ENCODE measurements at regions of chr11 and their contacts with region 1.

Region 1: DNA sequence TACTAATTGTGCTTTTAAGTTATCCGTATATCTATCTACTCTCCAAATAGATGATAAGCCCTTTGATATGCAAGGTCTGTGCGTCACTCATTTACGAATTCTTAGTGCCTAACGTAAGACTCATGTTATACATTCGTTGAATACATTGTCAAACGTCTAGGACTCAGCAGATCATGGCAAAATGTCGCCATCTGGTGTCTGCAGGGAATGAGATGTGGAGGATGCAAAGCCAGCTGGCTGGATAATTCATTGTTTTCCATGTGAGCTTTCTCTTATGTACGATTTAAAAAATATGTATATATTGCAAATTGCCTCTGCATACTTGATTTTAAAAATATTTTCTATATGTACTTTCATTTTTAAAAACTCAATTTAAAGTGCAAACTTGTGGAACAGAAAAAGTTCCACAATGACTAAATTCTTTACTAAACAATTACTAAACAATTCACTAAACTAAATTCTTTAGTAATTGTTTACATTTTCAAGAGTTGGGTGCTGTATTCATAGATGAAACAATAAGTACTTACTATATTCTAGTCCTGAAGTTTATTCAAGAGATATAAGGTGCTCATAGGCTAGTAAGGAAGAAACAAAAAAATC is 33.8 kb downstream of the ZNF202 start:
- DNase-seq: peak; percentile 62
- H3K4me3 Mint-ChIP-seq: no peak overlapping the region
- H3K27ac Mint-ChIP-seq: no peak overlapping the region
- H3K4me1 Mint-ChIP-seq: no peaks in the 10 kb centered on the region
- H3K27me3 Mint-ChIP-seq: peaks cover 15% of the 10 kb centered on the region

Region 2: DNA sequence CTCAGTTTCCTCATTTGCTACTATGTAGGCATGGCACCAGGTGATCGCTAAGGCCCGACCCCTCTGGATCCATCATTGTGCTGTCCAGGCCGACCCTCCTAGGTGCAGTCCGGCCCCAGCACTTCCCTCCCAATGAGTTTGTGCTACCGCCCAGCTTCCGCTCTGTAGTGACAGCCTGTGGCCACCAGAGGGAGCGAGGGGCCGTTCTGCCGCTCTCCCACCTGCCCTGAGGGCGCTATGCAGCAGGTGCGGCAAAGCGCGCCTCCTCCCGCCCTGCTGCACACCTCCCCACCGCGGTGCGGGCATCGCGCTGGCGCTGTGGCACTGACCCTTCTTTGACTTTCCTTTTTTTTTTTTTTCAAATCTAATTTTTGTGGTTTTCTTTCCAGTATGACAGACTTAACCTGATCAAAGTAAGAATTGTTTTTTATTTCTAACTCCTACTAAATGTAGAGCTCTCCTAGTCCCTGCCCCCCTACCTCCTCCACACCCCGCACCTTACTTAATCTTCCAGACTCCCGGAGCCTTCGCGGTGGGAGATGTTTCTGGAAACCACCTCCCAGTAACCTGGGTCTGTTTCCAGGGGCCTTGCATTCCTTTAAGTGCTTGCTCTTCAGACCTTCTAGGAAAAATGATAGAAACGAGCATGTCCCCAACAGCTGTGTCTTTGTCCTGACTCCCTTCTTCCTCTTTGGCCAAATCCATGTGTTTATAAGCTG is 127.0 kb before region 1 on chr11:
- CTCF ChIA-PET with region 1: interaction called, 28 read pairs
- POLR2A ChIA-PET with region 1: no interaction called
- DNase-seq: peak; percentile 71
- H3K4me3 Mint-ChIP-seq: no peak overlapping the region
- H3K27ac Mint-ChIP-seq: no peak overlapping the region
- H3K4me1 Mint-ChIP-seq: peaks cover 32% of the 10 kb centered on the region
- H3K27me3 Mint-ChIP-seq: no peaks in the 10 kb centered on the region

Region 3: GRCh38 chr11:123640677-123641494 is 66.8 kb before region 1 on chr11:
- CTCF ChIA-PET with region 1: interaction called, 24 read pairs
- POLR2A ChIA-PET with region 1: no interaction called
- DNase-seq: peak; percentile 51
- H3K4me3 Mint-ChIP-seq: no peak overlapping the region
- H3K27ac Mint-ChIP-seq: no peak overlapping the region
- H3K4me1 Mint-ChIP-seq: no peaks in the 10 kb centered on the region
- H3K27me3 Mint-ChIP-seq: peaks cover 4% of the 10 kb centered on the region

Region 4: DNA sequence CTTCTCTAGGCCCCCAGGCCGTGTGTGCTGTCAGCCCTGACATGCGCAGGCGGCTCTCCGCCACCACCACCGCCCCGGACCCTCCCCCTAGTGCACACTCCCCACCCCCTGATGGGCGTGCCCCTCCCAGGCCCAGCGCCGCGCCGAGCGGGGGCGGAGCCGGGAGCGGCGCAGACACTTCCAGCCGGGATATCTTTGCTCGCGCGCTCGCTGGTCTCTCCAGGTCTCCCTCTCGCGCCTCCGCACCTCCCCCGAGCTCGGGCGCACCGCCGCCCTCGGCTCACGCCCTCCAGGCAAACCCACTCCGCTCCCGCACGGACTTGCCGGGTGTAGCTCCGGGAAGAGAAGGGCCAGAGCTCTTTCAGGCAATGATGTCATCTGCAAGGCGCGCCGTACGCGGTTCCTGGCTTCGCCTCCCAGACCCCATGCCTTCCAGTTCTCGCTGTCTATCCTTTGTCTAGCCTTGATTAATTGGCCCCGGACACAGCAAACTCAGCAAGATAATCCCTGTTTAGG is 53.1 kb before region 1 on chr11 and contains the start of gene SCN3B:
- CTCF ChIA-PET with region 1: interaction called, 14 read pairs
- POLR2A ChIA-PET with region 1: no interaction called
- DNase-seq: no peak
- H3K4me3 Mint-ChIP-seq: peak within 1 kb of the TSS; percentile 48
- H3K27ac Mint-ChIP-seq: no peak within 1 kb of the TSS
- H3K4me1 Mint-ChIP-seq: peaks cover 21% of the 10 kb centered on the region
- H3K27me3 Mint-ChIP-seq: peaks cover 49% of the 10 kb centered on the region
- total RNA-seq, gene SCN3B: 0.03 TPM in 1 of 2 experiments, not detected in the other

Measured in activated CD4-positive, alpha-beta memory T cell treated with anti-CD3 and anti-CD28 coated beads, Interleukin-2, amount 10 ng/mL, durations not matched to agents 7 days and 5 days (primary cell).